ENCODE measurements at regions of chr19 and their contacts with region 1.

Region 1: GRCh38 chr19:57103573-57104277 is 16.1 kb upstream of the USP29 start:
- DNase-seq: peak; percentile 62
- H3K4me3 ChIP-seq: no peak overlapping the region
- H3K27ac ChIP-seq: no peak overlapping the region
- H3K4me1 ChIP-seq: no peaks in the 10 kb centered on the region
- CTCF ChIP-seq: peak; percentile 89

Region 2: GRCh38 chr19:57135797-57136196 is 32.1 kb after region 1 on chr19:
- CTCF ChIA-PET with region 1: no interaction called
- POLR2A ChIA-PET with region 1: no interaction called
- intact Hi-C with region 1: no loop called
- DNase-seq: no peak
- H3K4me3 ChIP-seq: no peak overlapping the region
- H3K27ac ChIP-seq: no peak overlapping the region
- H3K4me1 ChIP-seq: no peaks in the 10 kb centered on the region
- CTCF ChIP-seq: no peak

Region 3: GRCh38 chr19:57465495-57466395 is 362.0 kb after region 1 on chr19:
- CTCF ChIA-PET with region 1: no interaction called
- POLR2A ChIA-PET with region 1: no interaction called
- intact Hi-C with region 1: loop called (anchors 5 kb)
- DNase-seq: peak; percentile 74
- H3K4me3 ChIP-seq: no peak overlapping the region
- H3K27ac ChIP-seq: no peak overlapping the region
- H3K4me1 ChIP-seq: no peaks in the 10 kb centered on the region
- CTCF ChIP-seq: peak; percentile 93

Region 4: DNA sequence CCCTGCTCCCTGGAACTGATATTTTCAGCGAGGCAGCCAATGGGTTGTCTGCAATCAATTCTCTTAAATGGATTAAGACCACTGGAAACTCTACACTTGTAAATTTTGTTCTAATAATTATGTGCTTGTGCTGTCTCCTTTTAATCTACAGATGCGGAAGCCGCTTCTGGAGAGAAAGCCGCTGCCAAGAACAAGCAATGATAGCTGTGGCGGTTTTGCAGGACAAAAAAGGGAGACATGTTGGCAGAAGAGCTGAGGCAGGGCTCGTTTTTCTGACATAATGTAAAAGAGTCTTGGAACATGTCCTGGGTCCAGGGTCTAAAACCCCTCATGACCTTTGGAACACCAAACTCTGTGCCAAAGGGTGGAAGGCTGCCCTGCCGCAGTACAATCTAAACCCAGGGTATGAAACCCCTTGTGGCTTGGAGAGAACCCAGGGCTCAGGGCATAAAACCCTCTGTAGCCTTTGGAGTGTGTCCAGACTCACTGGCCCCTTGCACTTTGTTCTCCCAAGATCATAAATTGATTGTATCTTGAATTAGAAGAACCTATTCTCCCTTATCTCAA is 800.0 kb after region 1 on chr19:
- CTCF ChIA-PET with region 1: no interaction called
- POLR2A ChIA-PET with region 1: no interaction called
- intact Hi-C with region 1: loop called (anchors 10 kb)
- DNase-seq: no peak
- H3K4me3 ChIP-seq: no peak overlapping the region
- H3K27ac ChIP-seq: no peak overlapping the region
- H3K4me1 ChIP-seq: no peaks in the 10 kb centered on the region
- CTCF ChIP-seq: peak; percentile 59; the same call in 1 of the 2 replicates